ENCODE measurements at regions of chr12 and their contacts with region 1.

Region 1: DNA sequence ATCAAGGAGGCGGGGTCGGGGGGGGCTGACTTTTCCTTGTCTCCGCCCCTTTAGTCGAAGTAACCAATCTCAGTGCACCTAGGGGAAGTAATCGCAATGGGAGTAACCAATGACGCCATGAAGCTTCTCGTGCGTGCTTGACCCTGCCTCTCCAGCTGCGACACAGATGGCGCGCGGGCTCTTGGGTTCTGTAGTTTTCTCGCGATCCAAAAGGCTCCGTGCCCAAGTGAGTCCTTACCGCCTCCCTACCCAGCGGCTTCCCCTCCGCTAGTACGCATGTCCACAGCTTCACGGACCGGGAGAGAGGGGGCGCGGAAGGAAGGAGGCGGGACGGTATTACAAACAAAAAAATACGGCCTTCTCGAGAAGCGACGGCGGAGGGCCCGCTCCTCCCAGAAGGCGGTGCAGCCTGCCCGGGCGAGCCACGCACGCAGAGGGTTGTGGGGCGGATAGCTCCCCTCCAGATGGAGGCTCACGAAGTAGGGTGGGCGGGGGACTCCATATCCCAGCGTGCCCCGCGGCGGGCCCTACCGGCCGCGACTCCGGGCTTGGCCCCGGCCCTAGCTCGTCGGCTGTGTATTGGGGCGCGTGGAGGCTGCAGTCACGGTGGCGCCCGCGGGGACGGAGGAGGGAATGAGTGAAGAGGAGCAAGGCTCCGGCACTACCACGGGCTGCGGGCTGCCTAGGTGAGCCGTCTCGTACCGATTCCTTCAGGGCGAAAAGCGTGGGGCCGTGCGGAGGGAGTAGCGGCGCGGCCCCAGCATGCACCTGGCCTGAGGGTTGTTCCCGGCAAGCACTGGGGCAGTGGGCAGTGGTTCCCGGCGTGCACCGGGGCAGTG is at the start of gene TARBP2:
- DNase-seq: peak; percentile 98
- ATAC-seq: peak; percentile 84
- H3K4me3 Mint-ChIP-seq: peak within 1 kb of the TSS; percentile 81
- H3K27ac Mint-ChIP-seq: peak within 1 kb of the TSS; percentile 98
- H3K4me1 Mint-ChIP-seq: peaks cover 31% of the 10 kb centered on the region
- H3K27me3 Mint-ChIP-seq: no peaks in the 10 kb centered on the region
- total RNA-seq, gene TARBP2: 28.3 to 30.2 TPM

Region 2: DNA sequence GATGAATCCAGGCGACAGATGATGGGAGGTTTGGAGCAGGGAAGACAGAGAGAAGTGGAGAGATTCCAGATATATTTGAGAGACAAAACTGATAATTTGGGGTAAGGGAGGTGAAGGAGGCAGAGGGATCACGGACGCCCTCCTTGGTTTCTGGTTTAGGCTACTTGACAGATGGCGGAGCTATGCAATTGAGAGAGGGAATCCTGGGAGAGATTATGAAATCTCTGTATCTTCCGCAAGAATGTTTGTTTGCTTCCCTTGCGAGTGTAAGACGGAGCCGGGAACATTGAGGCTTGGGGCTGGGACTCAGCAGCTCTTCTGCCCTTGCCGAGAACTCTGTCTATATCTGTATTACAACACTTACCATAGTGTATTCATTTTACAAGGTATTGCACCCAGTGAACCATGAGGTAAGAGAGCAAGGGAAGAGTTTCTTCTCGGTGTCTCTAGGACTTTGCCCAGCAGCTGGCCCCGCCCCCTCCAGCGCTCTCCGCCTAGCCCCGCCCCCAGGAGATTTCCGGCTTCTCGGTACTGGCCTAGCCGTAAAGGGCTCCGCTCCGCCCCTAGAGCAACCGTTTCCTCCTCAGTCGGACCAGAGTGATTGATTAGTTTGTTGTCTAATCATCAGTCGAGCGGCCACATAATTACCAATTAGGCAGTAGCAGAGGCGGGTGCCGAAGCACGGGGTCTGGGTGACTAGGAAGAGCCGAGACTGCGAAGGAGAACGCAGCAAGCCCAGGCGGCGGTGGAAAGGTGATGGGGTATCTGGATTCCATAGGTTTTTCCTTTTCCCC is 59.8 kb before region 1 on chr12 and contains the start of gene PRR13:
- CTCF ChIA-PET with region 1: no interaction called
- POLR2A ChIA-PET with region 1: no interaction called
- intact Hi-C with region 1: loop called in 1 of 2 experiments (anchors 1 kb)
- DNase-seq: peak; percentile 100
- ATAC-seq: peak; percentile 99
- H3K4me3 Mint-ChIP-seq: peak within 1 kb of the TSS; percentile 92
- H3K27ac Mint-ChIP-seq: peak within 1 kb of the TSS; percentile 95
- H3K4me1 Mint-ChIP-seq: peaks cover 30% of the 10 kb centered on the region
- H3K27me3 Mint-ChIP-seq: no peaks in the 10 kb centered on the region
- total RNA-seq, gene PRR13: 250 to 266 TPM

Region 3: GRCh38 chr12:53481957-53482586 is 18.9 kb before region 1 on chr12:
- CTCF ChIA-PET with region 1: interaction called, 7 read pairs
- POLR2A ChIA-PET with region 1: interaction called, 23 read pairs
- intact Hi-C with region 1: no loop called
- DNase-seq: no peak
- ATAC-seq: peak; percentile 33
- H3K4me3 Mint-ChIP-seq: no peak overlapping the region
- H3K27ac Mint-ChIP-seq: peak overlapping the region; percentile 34
- H3K4me1 Mint-ChIP-seq: peaks cover 3% of the 10 kb centered on the region
- H3K27me3 Mint-ChIP-seq: no peaks in the 10 kb centered on the region

Region 4: GRCh38 chr12:53530920-53531319 is 29.9 kb after region 1 on chr12:
- CTCF ChIA-PET with region 1: no interaction called
- POLR2A ChIA-PET with region 1: no interaction called
- intact Hi-C with region 1: no loop called
- DNase-seq: no peak
- ATAC-seq: no peak
- H3K4me3 Mint-ChIP-seq: no peak overlapping the region
- H3K27ac Mint-ChIP-seq: no peak overlapping the region
- H3K4me1 Mint-ChIP-seq: no peaks in the 10 kb centered on the region
- H3K27me3 Mint-ChIP-seq: no peaks in the 10 kb centered on the region

Region 5: GRCh38 chr12:53561590-53561953 is 60.6 kb after region 1 on chr12:
- CTCF ChIA-PET with region 1: no interaction called
- POLR2A ChIA-PET with region 1: no interaction called
- intact Hi-C with region 1: no loop called
- DNase-seq: no peak
- ATAC-seq: peak; percentile 93
- H3K4me3 Mint-ChIP-seq: no peak overlapping the region
- H3K27ac Mint-ChIP-seq: peak overlapping the region; percentile 76
- H3K4me1 Mint-ChIP-seq: peaks cover 63% of the 10 kb centered on the region
- H3K27me3 Mint-ChIP-seq: no peaks in the 10 kb centered on the region

Region 6: DNA sequence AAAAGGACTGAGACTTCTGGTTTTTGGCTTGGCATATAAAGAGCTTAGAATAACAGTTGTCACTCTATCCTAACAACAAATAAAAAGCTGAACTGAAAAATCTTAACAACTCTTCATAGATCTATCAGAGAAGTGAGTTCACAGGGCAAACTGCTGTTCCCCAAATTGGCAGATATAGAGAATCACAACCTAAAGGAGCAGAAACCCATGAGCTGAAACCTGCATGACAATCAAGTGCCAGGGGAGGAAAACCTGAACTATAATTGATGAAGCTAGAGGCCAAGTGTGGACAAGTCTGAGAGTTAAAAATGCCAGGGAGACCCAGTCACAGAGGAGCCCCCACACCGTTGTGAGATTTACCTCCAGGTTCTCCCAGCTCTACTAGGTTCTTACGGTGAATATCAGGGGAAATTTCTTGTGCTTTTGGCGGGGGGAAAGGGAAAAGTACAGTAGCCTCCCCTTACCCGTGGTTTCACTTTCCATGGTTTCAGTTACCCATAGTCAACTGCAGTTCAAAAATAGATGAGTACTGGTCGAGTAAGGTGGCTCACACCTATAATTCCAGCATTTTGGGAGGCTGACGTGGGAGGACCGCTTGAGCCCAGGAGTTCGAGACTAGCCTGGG is 71.3 kb after region 1 on chr12:
- CTCF ChIA-PET with region 1: no interaction called
- POLR2A ChIA-PET with region 1: no interaction called
- intact Hi-C with region 1: no loop called
- DNase-seq: no peak
- ATAC-seq: no peak
- H3K4me3 Mint-ChIP-seq: no peak overlapping the region
- H3K27ac Mint-ChIP-seq: no peak overlapping the region
- H3K4me1 Mint-ChIP-seq: peaks cover 49% of the 10 kb centered on the region
- H3K27me3 Mint-ChIP-seq: no peaks in the 10 kb centered on the region

Region 7: GRCh38 chr12:53727310-53728041 is 226.5 kb after region 1 on chr12 and contains the start of gene CALCOCO1:
- CTCF ChIA-PET with region 1: no interaction called
- POLR2A ChIA-PET with region 1: no interaction called
- intact Hi-C with region 1: loop called (anchors 1 kb)
- DNase-seq: peak; percentile 99
- ATAC-seq: peak; percentile 99
- H3K4me3 Mint-ChIP-seq: peak within 1 kb of the TSS; percentile 80
- H3K27ac Mint-ChIP-seq: peak within 1 kb of the TSS; percentile 73
- H3K4me1 Mint-ChIP-seq: peaks cover 20% of the 10 kb centered on the region
- H3K27me3 Mint-ChIP-seq: no peaks in the 10 kb centered on the region
- total RNA-seq, gene CALCOCO1: 17.1 to 20.4 TPM

Region 8: DNA sequence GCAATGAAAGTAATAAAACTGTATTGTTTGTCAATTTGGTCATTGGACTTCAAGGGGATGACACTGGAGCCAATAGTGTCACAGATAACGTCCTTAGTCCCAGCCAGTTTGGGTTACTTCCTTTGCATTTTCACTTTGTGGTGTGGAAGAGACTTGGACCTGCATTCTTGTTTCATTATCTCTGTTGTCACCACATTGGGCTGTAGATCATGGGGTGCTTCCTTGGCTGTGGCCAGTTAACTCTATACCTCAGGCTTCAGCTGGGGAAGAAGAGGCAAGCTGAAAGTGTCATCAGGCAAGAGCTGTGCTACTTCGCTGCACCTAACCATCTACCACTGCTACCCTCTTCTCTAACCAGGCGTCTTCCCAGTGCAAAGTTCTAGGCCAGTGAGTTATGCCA is 265.9 kb after region 1 on chr12:
- CTCF ChIA-PET with region 1: no interaction called
- POLR2A ChIA-PET with region 1: no interaction called
- intact Hi-C with region 1: no loop called
- DNase-seq: no peak
- ATAC-seq: no peak
- H3K4me3 Mint-ChIP-seq: no peak overlapping the region
- H3K27ac Mint-ChIP-seq: no peak overlapping the region
- H3K4me1 Mint-ChIP-seq: no peaks in the 10 kb centered on the region
- H3K27me3 Mint-ChIP-seq: peaks cover 43% of the 10 kb centered on the region

Measured in activated CD4-positive, alpha-beta T cell treated with anti-CD3 and anti-CD28 coated beads for 36 hours (primary cell).